Activated CD8-positive, alpha-beta T cell treated with anti-CD3 and anti-CD28 coated beads for 36 hours (primary cell): ENCODE measurements at regions of chr20 and their contacts with region 1.

Region 1: DNA sequence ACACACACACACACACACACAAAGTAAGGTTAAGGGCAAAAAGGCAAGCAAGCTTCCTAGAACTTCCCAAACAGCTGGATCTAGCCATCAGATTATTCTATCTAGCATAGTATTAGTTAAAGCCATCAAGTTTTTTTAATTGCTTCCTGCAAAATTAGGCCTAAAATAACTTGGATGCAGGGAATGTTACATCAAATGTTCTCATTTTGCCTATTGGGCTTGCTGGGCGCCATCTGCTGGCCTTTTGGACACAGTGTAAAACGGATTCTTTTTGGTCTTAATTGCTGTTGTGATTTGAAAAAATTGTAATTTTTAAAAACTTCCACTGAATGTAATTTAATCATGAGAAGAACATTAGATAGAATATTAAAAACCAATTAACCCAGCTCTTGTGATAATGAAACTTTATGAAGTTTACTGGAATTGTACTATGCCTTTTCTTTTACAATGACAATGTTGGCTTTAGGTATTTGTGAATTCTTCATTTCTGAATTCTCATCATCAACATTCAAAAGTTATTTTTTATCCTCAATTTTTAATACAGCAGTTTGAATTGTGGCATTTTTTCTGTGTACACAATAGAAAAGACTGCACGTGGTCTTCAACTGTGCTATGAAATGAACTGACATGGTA is 6.8 kb downstream of the MKKS start:
- DNase-seq: peak; percentile 66
- ATAC-seq: no peak
- H3K4me3 Mint-ChIP-seq: no peak overlapping the region
- H3K27ac Mint-ChIP-seq: no peak overlapping the region
- H3K4me1 Mint-ChIP-seq: peaks cover 42% of the 10 kb centered on the region
- H3K27me3 Mint-ChIP-seq: no peaks in the 10 kb centered on the region
- CTCF ChIP-seq: peak; percentile 82

Region 2: GRCh38 chr20:9616833-9617489 is 810.2 kb before region 1 on chr20:
- CTCF ChIA-PET with region 1: no interaction called
- POLR2A ChIA-PET with region 1: no interaction called
- intact Hi-C with region 1: loop called (anchors 10 kb)
- DNase-seq: peak; percentile 69
- ATAC-seq: peak; percentile 51
- H3K4me3 Mint-ChIP-seq: no peak overlapping the region
- H3K27ac Mint-ChIP-seq: no peak overlapping the region
- H3K4me1 Mint-ChIP-seq: no peaks in the 10 kb centered on the region
- H3K27me3 Mint-ChIP-seq: no peaks in the 10 kb centered on the region
- CTCF ChIP-seq: peak; percentile 91

Region 3: GRCh38 chr20:9978397-9979004 is 448.7 kb before region 1 on chr20:
- CTCF ChIA-PET with region 1: interaction called, 10 read pairs
- POLR2A ChIA-PET with region 1: no interaction called
- intact Hi-C with region 1: loop called (anchors 5 kb)
- DNase-seq: peak; percentile 39
- ATAC-seq: peak; percentile 91
- H3K4me3 Mint-ChIP-seq: no peak overlapping the region
- H3K27ac Mint-ChIP-seq: no peak overlapping the region
- H3K4me1 Mint-ChIP-seq: peaks cover 2% of the 10 kb centered on the region
- H3K27me3 Mint-ChIP-seq: peaks cover 1% of the 10 kb centered on the region
- CTCF ChIP-seq: peak; percentile 76

Region 4: DNA sequence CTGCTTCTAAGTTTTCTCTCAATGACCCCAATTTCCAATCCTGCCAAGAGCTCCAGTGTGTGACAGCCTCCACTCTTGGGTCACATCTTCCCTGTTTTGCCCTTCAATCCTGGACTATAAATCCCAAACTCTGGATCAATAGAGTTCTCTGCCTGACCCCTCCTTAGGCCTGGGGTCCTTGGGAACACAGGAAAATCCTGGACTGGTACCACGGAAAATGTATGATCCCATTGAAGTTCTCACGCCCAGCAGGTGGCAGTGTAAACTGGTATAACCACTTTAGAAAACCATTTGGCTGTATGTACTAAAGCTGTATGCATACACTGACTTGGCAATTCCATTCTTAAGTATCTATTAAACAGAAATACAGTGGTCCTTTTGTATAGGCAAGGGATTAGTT is 110.6 kb before region 1 on chr20:
- CTCF ChIA-PET with region 1: interaction called, 11 read pairs
- POLR2A ChIA-PET with region 1: no interaction called
- intact Hi-C with region 1: no loop called
- DNase-seq: peak; percentile 32
- ATAC-seq: no peak
- H3K4me3 Mint-ChIP-seq: no peak overlapping the region
- H3K27ac Mint-ChIP-seq: no peak overlapping the region
- H3K4me1 Mint-ChIP-seq: no peaks in the 10 kb centered on the region
- H3K27me3 Mint-ChIP-seq: peaks cover 13% of the 10 kb centered on the region
- CTCF ChIP-seq: peak; percentile 26

Region 5: GRCh38 chr20:10412591-10413408 is 14.4 kb before region 1 on chr20:
- CTCF ChIA-PET with region 1: interaction called, 11 read pairs
- POLR2A ChIA-PET with region 1: no interaction called
- intact Hi-C with region 1: no loop called
- DNase-seq: no peak
- ATAC-seq: no peak
- H3K4me3 Mint-ChIP-seq: no peak overlapping the region
- H3K27ac Mint-ChIP-seq: no peak overlapping the region
- H3K4me1 Mint-ChIP-seq: peaks cover 4% of the 10 kb centered on the region
- H3K27me3 Mint-ChIP-seq: no peaks in the 10 kb centered on the region
- CTCF ChIP-seq: peak; percentile 23

Region 6: GRCh38 chr20:10498200-10498599 is 71.0 kb after region 1 on chr20:
- CTCF ChIA-PET with region 1: no interaction called
- POLR2A ChIA-PET with region 1: no interaction called
- intact Hi-C with region 1: no loop called
- DNase-seq: no peak
- ATAC-seq: no peak
- H3K4me3 Mint-ChIP-seq: no peak overlapping the region
- H3K27ac Mint-ChIP-seq: no peak overlapping the region
- H3K4me1 Mint-ChIP-seq: peaks cover 43% of the 10 kb centered on the region
- H3K27me3 Mint-ChIP-seq: no peaks in the 10 kb centered on the region
- CTCF ChIP-seq: no peak

Region 7: GRCh38 chr20:10508468-10509251 is 81.5 kb after region 1 on chr20:
- CTCF ChIA-PET with region 1: no interaction called
- POLR2A ChIA-PET with region 1: no interaction called
- intact Hi-C with region 1: no loop called
- DNase-seq: no peak
- ATAC-seq: no peak
- H3K4me3 Mint-ChIP-seq: no peak overlapping the region
- H3K27ac Mint-ChIP-seq: no peak overlapping the region
- H3K4me1 Mint-ChIP-seq: peaks cover 17% of the 10 kb centered on the region
- H3K27me3 Mint-ChIP-seq: no peaks in the 10 kb centered on the region
- CTCF ChIP-seq: no peak